Activated T-helper 2 cell treated with anti-CD3 and anti-CD28 coated beads, Interferon-gamma antibody, Interleukin-2, Interleukin-4, amounts not matched to agents 10 μg/mL and 5 μg/mL and 100 μg/mL, durations not matched to agents 14 hours and 24 hours and 36 hours (primary cell): ENCODE measurements at regions of chr12 and their contacts with region 1.

Region 1: GRCh38 chr12:122078141-122079032 is at the start of gene MLXIP:
- DNase-seq: peak; percentile 87
- H3K4me3 Mint-ChIP-seq: peak within 1 kb of the TSS; percentile 86
- H3K27ac Mint-ChIP-seq: peak within 1 kb of the TSS; percentile 74
- H3K4me1 Mint-ChIP-seq: peaks cover 37% of the 10 kb centered on the region
- H3K27me3 Mint-ChIP-seq: peaks cover 2% of the 10 kb centered on the region
- total RNA-seq, gene MLXIP: 36.7 and 41.4 TPM in 2 replicates

Region 2: GRCh38 chr12:121970581-121971300 is 107.6 kb before region 1 on chr12:
- intact Hi-C with region 1: no loop called
- DNase-seq: no peak
- H3K4me3 Mint-ChIP-seq: no peak overlapping the region
- H3K27ac Mint-ChIP-seq: no peak overlapping the region
- H3K4me1 Mint-ChIP-seq: no peaks in the 10 kb centered on the region
- H3K27me3 Mint-ChIP-seq: peaks cover 4% of the 10 kb centered on the region

Region 3: DNA sequence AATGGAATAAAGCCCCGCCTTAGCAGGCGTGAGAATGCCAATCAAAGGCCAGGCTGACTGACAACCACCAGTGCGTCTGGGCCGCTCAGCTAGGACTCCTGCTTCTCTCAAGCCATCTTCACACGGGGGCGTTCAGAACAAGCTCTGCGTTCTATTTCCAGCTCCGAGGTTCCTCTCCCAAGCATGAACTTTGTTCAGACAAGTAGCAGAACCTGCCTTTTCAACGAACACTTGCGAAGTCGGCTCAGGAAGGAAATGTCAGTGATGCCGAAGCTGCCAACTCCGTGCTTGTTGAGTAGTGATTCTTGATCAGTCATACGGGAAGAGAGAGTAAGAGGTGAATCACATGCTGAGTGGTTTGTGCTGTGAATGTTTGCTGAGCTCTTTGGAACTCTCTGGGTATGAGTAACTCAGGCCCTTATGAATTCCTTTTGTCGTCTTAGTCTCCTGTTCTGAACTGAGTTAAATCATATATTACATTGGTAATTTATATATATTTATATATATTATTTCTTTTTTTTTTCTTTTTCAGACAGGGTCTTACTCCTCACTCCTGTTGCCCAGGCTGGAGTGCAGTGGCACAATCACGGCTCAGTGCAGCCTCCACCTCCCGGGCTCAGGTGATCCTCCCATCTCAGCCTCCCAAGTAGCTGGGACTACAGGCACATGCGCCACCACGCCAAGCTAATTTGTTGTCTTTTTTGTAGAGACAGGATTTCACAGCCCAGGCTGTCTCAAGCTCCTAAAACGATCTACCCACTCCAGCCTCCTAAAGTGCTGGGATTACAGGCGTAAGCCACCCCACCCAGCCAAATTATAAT is 86.1 kb before region 1 on chr12:
- intact Hi-C with region 1: loop called (anchors 5 kb)
- DNase-seq: peak; percentile 43
- H3K4me3 Mint-ChIP-seq: no peak overlapping the region
- H3K27ac Mint-ChIP-seq: peak overlapping the region; percentile 88
- H3K4me1 Mint-ChIP-seq: peaks cover 17% of the 10 kb centered on the region
- H3K27me3 Mint-ChIP-seq: peaks cover 11% of the 10 kb centered on the region

Region 4: GRCh38 chr12:122107261-122107660 is 28.9 kb after region 1 on chr12:
- intact Hi-C with region 1: loop called (anchors 1 kb)
- DNase-seq: no peak
- H3K4me3 Mint-ChIP-seq: no peak overlapping the region
- H3K27ac Mint-ChIP-seq: no peak overlapping the region
- H3K4me1 Mint-ChIP-seq: peaks cover 36% of the 10 kb centered on the region
- H3K27me3 Mint-ChIP-seq: no peaks in the 10 kb centered on the region